Activated CD4-positive, alpha-beta T cell treated with anti-CD3 and anti-CD28 coated beads, Interleukin-2, amount 10 ng/mL, durations not matched to agents 7 days and 5 days (primary cell): ENCODE measurements at regions of chr1 and their contacts with region 1.

Region 1: DNA sequence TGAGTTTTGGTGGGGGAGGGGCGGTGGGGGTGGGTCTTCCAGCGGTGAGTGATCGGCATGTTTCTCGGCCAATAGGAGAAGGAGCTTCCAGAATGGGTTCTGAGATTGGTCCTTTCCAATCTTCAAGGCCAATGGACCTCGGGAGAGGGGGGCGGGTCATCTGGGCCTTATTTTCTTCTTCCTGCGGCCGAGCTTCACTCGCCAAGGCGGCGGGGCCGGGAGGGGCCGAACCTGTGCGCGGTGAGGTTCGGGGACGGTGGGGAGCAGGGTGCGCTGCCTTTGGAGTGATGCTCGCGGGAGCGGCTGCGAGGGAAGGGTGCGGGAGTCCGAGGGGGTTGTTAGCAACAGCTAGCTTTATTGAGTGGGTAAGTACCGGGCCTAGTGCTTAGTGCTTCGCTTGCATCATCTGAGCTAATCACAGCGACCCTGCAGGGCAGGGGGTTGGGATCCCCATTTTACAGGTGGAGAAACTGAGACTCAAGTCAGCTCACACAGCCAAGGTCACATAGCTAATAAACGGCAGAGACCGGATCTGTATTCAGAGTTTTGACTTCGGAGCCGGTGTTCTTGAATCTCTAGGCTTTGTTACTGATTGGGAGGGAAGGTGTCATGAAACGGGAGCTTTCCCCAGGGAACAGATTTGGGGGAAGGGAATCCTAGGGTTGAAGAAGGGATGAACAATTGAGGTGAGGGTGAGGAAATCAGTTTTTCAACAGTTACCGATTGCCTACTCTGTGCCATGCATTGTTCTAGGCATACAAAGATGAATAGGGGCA is 549 bp downstream of the KDM4A start:
- DNase-seq: peak; percentile 95
- H3K4me3 Mint-ChIP-seq: peak overlapping the region; percentile 93
- H3K27ac Mint-ChIP-seq: peak overlapping the region; percentile 96
- H3K4me1 Mint-ChIP-seq: peaks cover 37% of the 10 kb centered on the region
- H3K27me3 Mint-ChIP-seq: peaks cover under 1% of the 10 kb centered on the region

Region 2: GRCh38 chr1:43499886-43500285 is 150.6 kb before region 1 on chr1:
- CTCF ChIA-PET with region 1: no interaction called
- POLR2A ChIA-PET with region 1: no interaction called
- DNase-seq: no peak
- H3K4me3 Mint-ChIP-seq: no peak overlapping the region
- H3K27ac Mint-ChIP-seq: no peak overlapping the region
- H3K4me1 Mint-ChIP-seq: no peaks in the 10 kb centered on the region
- H3K27me3 Mint-ChIP-seq: peaks cover 7% of the 10 kb centered on the region

Region 3: DNA sequence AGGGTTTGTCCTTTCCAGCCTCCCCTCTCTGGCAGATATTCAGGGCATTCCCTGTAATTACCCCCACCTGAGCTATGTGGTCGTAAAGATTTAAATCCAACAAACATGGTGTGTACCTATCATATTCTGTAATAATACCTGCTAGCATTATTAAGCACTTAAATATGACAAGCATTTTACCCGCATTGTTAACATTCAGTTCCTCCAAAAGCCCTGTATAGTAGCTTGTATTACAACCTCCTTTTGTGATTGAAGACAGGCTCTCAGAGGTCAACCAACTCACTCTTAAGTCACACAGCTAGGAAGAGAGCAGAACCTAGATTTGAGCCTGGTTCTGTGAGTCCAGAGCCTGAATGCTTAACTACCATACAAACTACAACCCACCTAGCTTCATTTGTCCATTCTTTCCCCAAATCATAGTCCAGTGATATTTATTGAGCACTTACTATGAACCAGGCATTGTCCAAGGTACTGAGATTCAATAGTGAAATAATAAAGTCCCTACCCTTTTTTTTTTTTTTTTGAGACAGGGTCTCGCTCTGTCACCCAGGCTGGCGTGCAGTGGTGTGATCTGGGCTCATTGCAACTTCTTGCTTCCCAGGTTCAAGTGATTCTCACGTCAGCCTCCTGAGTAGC is 14.4 kb before region 1 on chr1:
- CTCF ChIA-PET with region 1: interaction called, 10 read pairs
- POLR2A ChIA-PET with region 1: no interaction called
- DNase-seq: no peak
- H3K4me3 Mint-ChIP-seq: no peak overlapping the region
- H3K27ac Mint-ChIP-seq: no peak overlapping the region
- H3K4me1 Mint-ChIP-seq: no peaks in the 10 kb centered on the region
- H3K27me3 Mint-ChIP-seq: peaks cover 2% of the 10 kb centered on the region

Region 4: DNA sequence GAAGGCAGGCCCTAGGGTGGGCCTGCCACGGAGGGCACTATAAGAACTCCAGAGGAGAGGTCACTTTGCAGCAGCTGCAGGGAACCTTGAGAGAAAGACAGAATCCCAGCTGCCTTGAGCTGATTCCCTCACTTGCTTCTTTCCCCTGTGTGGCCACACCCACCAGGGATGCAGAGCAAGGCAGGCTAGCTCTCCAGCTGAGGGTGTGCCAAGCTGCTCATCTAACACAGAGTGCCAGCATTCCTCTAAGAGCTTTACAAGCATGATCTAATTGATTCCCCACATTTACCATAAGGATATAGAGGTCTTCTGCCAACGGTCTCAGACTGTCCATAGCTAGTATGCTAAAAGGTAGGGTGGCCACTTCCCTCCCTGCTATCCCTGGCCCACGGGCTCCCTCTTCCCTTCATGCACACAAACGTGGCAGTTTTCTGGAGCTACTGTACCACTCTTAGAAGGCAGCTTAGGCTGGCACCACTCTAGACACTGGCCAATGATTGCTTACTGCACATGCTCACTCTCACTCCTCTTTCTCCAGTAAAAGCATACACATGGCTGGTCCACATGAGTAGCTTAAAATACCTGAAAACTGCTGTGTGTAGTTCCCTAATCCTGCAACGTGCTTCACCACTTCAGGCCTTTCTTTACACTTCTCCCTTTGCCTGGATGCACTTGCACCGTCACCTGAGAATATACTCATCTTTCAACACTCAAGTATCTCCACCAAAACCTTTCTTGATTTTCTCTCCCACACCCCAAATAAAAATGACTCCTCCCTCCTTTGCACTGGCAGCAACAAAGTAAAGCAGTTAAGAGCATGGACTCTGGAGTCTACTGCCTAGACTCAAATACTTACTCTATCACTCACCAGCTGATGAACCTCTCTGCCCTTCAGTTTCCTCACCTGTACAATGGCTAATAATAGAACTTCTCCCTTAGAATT is 620.5 kb after region 1 on chr1:
- CTCF ChIA-PET with region 1: no interaction called
- POLR2A ChIA-PET with region 1: no interaction called
- DNase-seq: no peak
- H3K4me3 Mint-ChIP-seq: no peak overlapping the region
- H3K27ac Mint-ChIP-seq: no peak overlapping the region
- H3K4me1 Mint-ChIP-seq: peaks cover 18% of the 10 kb centered on the region
- H3K27me3 Mint-ChIP-seq: no peaks in the 10 kb centered on the region